GM12878 (cell line): ENCODE measurements at regions of chr3 and their contacts with region 1.

Region 1: GRCh38 chr3:150434234-150434633 is 26.1 kb downstream of the TSC22D2 start:
- DNase-seq: no peak
- ATAC-seq: no peak
- H3K4me3 ChIP-seq: no peak overlapping the region
- H3K27ac ChIP-seq: no peak overlapping the region
- H3K4me1 ChIP-seq: no peaks in the 10 kb centered on the region
- H3K27me3 ChIP-seq: no peaks in the 10 kb centered on the region
- CTCF ChIP-seq: no peak
- EP300 ChIP-seq: no peak
- POLR2A ChIP-seq: no peak
- RAD21 ChIP-seq: no peak

Region 2: GRCh38 chr3:150421799-150422548 is 12.3 kb before region 1 on chr3:
- CTCF ChIA-PET with region 1: interaction called, 7 read pairs
- POLR2A ChIA-PET with region 1: interaction called, 4 read pairs
- RAD21 ChIA-PET with region 1: interaction called, 4 read pairs
- SMC1A ChIA-PET with region 1: interaction called, 51 read pairs
- in situ Hi-C with region 1: no loop called
- intact Hi-C with region 1: no loop called
- DNase-seq: no peak
- ATAC-seq: peak; percentile 51
- H3K4me3 ChIP-seq: no peak overlapping the region
- H3K27ac ChIP-seq: no peak overlapping the region
- H3K4me1 ChIP-seq: no peaks in the 10 kb centered on the region
- H3K27me3 ChIP-seq: no peaks in the 10 kb centered on the region
- CTCF ChIP-seq: peak in 1 of 3 experiments; percentile 31; a peak in 1 of 6 replicates
- EP300 ChIP-seq: no peak
- POLR2A ChIP-seq: no peak
- RAD21 ChIP-seq: no peak